Heart right ventricle (tissue), 16 donors: ENCODE measurements at regions of chr12 and their contacts with region 1.

Region 1: DNA sequence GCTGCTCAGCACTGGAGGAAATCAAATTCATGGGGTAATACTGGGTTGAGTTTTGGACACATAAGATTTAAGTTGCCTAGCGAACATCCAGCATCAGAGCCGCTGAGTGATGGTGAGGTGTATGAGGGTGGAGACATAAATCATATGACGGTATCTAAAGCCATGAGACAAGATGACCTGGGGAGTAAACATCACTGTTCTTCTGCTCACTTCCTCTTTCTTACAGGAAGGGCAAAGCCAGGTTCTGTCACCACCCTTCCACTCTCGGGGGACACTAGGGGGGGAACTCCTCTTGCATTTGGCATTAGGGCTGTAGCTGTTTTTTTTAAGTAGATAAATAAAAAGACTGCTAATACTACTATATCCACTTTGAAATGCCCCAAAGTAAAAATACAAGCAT is 24.0 kb downstream of the PRDM4 start:
- DNase-seq: no peak
- ATAC-seq: no peak
- H3K4me3 ChIP-seq: no peak overlapping the region
- H3K27ac ChIP-seq: no peak overlapping the region
- H3K4me1 ChIP-seq: no peaks in the 10 kb centered on the region
- H3K27me3 ChIP-seq: no peaks in the 10 kb centered on the region
- CTCF ChIP-seq: no peak

Region 2: DNA sequence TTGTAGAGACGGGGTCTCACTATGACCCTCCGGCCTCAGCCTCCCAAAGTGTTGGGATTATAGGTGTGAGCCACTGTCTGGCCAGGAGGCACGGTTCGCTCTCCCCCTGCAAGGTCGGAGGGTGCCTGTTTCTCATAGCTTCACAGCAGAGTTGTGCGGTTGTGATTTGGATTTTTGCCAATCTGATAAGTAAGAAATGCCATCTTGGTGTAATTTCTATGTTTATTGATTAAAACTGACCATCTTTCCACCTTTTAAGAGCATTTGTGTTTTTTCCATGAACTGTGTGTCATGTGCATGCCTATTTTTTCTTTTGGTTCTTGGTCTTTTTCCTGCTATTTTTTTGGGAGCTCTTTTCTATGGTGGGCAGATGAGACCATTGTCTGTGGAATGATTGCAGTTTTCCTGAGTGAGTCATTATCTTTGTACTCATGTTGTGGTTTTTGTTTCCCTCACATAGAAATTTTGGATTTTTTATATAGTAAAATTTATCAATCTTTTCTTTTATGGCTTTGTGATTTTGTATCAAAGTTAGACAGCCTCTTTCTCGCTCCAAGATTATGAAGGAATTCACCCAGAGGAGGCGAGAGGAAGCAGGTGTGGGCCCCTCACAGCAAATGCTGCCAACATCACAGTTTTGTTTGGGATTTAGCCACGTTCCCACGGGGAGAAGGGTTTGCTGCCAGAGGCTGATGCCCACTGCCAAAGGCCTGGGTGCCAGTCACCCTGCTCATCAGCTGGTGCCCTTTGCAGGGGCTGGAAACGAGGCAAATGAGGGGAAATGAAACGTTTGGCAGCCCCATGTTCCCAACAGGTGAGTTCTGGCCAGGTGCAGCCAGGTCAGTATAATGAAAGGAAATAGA is 1106.9 kb before region 1 on chr12:
- intact Hi-C with region 1: no loop called
- DNase-seq: no peak
- ATAC-seq: no peak
- H3K4me3 ChIP-seq: no peak overlapping the region
- H3K27ac ChIP-seq: no peak overlapping the region
- H3K4me1 ChIP-seq: no peaks in the 10 kb centered on the region
- H3K27me3 ChIP-seq: peaks cover 0 to 10% (median 0%) of the 10 kb centered on the region in 7 donors
- CTCF ChIP-seq: no peak

Region 3: DNA sequence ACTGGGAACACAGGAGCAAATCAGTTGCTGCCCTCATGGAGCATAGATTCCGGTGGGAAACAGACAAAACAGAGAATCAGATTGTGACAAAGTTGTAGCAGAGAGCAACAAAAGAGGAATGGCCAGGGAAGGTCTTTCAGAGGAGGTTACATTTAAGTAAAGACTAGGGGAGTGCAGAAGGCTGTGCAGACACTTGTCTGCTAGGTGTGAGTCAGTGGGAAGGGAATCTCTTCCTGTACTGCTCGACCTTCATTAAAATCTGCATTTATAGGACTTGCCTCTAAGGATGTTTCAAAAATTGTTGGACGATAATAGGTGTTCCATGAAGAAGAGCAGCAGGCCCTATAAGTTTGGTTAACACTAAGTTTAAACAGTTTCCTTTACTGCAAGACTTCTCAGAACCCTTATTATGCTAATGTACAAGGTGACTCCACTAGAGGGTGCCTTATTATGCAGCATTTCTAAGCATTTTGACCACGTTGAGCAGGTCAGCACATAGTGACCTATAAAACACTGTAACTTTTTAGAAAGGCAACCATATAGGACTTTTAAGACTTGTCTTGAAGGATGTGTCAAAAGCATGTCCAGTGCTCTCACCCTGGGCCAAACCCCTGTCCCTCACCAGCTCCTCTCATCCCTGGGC is 1054.2 kb before region 1 on chr12:
- intact Hi-C with region 1: loop called in 1 of 10 experiments (anchors 5 kb)
- DNase-seq: no peak
- ATAC-seq: peak in 1 of 8 donors; percentile 44
- H3K4me3 ChIP-seq: no peak overlapping the region
- H3K27ac ChIP-seq: no peak overlapping the region
- H3K4me1 ChIP-seq: no peaks in the 10 kb centered on the region
- H3K27me3 ChIP-seq: peaks cover 0 to 7% (median 0%) of the 10 kb centered on the region in 7 donors
- CTCF ChIP-seq: peak in 6 of 9 donors; percentile 20 to 47 (median 40)

Region 4: GRCh38 chr12:107702106-107702505 is 34.8 kb before region 1 on chr12:
- intact Hi-C with region 1: loop called in 1 of 10 experiments (anchors 5 kb)
- DNase-seq: no peak
- ATAC-seq: no peak
- H3K4me3 ChIP-seq: no peak overlapping the region
- H3K27ac ChIP-seq: peak overlapping the region in 1 of 10 donors; percentile 28
- H3K4me1 ChIP-seq: peaks cover 0 to 8% (median 0%) of the 10 kb centered on the region in 9 donors
- H3K27me3 ChIP-seq: no peaks in the 10 kb centered on the region
- CTCF ChIP-seq: no peak